Ovary (tissue), 10 donors: ENCODE measurements at regions of chr17 and their contacts with region 1.

Region 1: DNA sequence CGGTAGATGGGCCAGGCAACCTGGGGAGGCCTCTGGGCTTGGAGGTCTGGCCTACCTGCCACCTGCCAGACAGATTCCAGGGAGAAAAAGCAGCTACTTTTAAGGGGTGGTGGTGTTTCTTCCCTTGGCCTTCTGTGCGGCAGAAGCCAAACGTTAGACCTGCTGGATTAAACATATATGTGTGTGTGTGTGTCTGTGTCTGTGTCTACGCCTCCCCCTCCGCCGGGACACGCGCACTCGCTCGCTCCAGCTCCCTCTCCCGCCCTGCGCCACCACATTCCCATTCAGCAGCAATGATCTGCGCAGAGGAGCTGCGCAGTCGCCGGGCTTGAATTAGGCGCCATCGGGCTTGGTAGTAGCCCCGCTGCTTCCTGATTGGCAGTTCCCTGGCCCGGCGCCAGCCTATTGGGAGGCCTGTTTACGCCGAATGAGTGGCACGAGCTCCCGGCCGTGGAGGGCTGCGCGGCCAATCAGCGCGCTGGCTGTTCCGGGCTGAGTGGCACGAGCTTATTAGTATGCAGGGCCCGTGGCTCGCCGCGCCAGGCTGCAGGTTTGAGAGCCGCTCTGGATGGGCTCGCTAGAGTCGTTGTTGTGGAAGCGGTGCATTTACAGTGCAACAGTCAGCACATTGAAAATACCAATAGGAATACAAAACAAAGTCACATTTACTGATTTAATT is at the start of gene BAHCC1:
- DNase-seq: peak; percentile 100
- H3K4me3 ChIP-seq: peak within 1 kb of the TSS; percentile 75
- H3K27ac ChIP-seq: peak within 1 kb of the TSS; percentile 87 to 94
- H3K4me1 ChIP-seq: peaks cover 24% of the 10 kb centered on the region
- H3K27me3 ChIP-seq: no peaks in the 10 kb centered on the region
- CTCF ChIP-seq: no peak
- EP300 ChIP-seq: no peak
- POLR2A ChIP-seq: peak; percentile 95
- total RNA-seq, gene BAHCC1: 7.6 to 31.9 (median 24.2) TPM

Region 2: DNA sequence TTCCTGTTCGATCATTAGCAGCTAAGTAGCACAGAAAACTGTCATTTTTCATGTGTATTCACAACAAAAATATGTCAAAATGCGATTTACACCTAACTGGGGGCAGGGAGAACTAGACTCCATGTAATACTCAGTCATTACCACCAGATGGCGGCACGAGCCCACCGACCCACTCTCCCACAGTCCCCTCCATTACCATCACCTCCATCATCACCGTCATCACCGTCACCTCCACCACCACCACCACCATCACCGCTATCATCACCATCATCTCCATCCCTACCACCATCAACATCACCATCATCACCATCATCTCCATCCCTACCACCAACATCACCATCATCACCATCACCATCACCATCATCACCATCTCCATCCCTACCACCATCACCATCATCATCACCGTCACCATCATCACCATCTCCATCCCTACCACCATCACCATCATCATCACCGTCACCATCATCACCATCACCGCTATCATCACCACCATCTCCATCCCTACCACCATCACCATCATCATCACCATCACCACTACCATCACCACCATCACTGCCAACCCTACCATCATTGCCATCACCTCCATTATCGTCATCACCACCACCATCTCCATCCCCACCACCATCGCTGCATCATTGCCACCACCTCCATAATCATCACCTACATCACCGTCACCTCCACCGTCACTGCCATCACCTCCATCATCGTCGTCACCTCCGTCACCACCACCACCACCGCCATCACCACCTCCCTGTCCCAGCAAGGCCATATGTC is 141.5 kb before region 1 on chr17:
- intact Hi-C with region 1: loop called in 1 of 4 experiments (anchors 5 kb)
- DNase-seq: peak in 2 of 5 donors; percentile 47 to 72
- H3K4me3 ChIP-seq: no peak overlapping the region
- H3K27ac ChIP-seq: no peak overlapping the region
- H3K4me1 ChIP-seq: peaks cover 3% of the 10 kb centered on the region
- H3K27me3 ChIP-seq: no peaks in the 10 kb centered on the region
- CTCF ChIP-seq: peak; percentile 57 to 92 (median 90)
- EP300 ChIP-seq: no peak
- POLR2A ChIP-seq: peak; percentile 31

Region 3: GRCh38 chr17:81294856-81295680 is 100.0 kb before region 1 on chr17 and contains the start of gene SLC38A10:
- intact Hi-C with region 1: loop called in 1 of 4 experiments (anchors 10 kb)
- DNase-seq: peak; percentile 90 to 94 (median 93)
- H3K4me3 ChIP-seq: peak within 1 kb of the TSS; percentile 65
- H3K27ac ChIP-seq: peak within 1 kb of the TSS; percentile 83 to 92
- H3K4me1 ChIP-seq: peaks cover 4% of the 10 kb centered on the region
- H3K27me3 ChIP-seq: no peaks in the 10 kb centered on the region
- CTCF ChIP-seq: no peak
- EP300 ChIP-seq: peak; percentile 6
- POLR2A ChIP-seq: peak; percentile 93
- total RNA-seq, gene SLC38A10: 46.6 to 75.7 (median 68.8) TPM

Region 4: DNA sequence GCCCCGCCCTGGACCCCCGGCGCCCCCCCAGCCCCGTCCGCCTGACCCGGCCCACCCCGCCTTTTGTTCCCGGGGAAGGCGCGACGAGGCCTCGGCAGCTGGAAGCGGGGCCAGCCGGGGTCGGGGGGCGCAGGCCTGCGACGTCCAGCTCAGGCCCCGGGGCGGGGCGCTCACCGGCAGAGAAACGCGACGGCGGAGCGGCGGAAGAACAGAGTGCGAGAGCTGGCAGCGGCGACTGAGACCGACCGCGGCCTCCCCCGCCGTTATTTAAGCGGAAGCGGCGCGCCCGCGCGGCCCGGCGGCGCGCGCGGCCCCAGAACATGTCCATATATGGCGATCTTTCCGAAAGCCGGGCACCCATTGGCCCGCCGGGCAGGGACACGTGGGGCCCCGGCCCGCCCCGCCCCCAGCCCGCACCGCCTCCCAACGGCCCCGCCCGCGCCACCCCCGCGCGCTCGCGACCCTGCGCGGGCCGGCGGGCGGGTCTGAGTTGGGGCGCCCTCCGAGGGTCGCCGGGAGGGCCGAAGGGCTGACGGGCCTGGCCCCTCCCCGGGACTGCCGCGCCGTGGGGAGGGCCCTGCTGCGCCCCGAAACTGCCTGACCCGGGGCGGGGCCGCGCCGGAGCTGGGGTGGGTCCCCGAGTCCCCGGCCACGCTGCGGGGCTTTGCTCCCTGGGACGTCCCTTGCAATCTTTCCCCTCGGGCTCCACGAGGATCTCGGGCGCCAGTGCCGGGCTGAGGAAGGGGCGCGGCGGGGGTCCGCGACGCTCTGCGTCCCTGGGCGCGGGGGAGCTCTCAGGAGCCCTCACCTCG is 117.7 kb after region 1 on chr17 and contains the start of gene ACTG1:
- intact Hi-C with region 1: loop called (anchors 2 to 5 kb)
- DNase-seq: peak; percentile 94 to 97 (median 95)
- H3K4me3 ChIP-seq: peak within 1 kb of the TSS; percentile 93
- H3K27ac ChIP-seq: peak within 1 kb of the TSS; percentile 98 to 100
- H3K4me1 ChIP-seq: peaks cover 14% of the 10 kb centered on the region
- H3K27me3 ChIP-seq: no peaks in the 10 kb centered on the region
- CTCF ChIP-seq: no peak
- EP300 ChIP-seq: no peak
- POLR2A ChIP-seq: peak; percentile 77
- total RNA-seq, gene ACTG1: 3,016 to 5,681 (median 4,174) TPM